ENCODE measurements at regions of chr10 and their contacts with region 1.

Region 1: DNA sequence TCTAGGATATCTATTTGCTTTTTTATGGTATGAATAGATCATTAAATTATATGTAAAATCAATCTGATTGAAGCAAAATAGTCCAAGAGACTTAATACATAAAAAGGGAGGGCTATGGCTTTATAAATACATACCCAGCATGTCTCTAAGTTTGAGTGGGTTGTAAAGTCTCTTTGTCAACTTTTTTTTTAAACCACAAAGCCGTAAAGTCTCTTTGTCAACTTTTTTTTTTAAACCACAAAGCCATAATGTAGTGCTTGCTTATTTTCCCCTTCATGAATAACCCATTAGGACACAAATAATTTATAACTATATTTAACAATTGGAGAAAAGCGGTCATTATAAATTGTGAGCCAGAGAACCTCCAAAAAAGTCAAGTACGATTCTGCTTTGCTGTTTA is 5.7 kb downstream of the HECTD2 start:
- DNase-seq: peak; percentile 25
- ATAC-seq: peak; percentile 57
- H3K4me3 ChIP-seq: no peak overlapping the region
- H3K27ac ChIP-seq: no peak overlapping the region
- H3K4me1 ChIP-seq: peaks cover 18% of the 10 kb centered on the region
- H3K27me3 ChIP-seq: no peaks in the 10 kb centered on the region
- CTCF ChIP-seq: no peak

Region 2: GRCh38 chr10:90592638-90593302 is 823.0 kb before region 1 on chr10:
- CTCF ChIA-PET with region 1: no interaction called
- POLR2A ChIA-PET with region 1: no interaction called
- intact Hi-C with region 1: no loop called
- DNase-seq: peak; percentile 63
- ATAC-seq: peak; percentile 91
- H3K4me3 ChIP-seq: no peak overlapping the region
- H3K27ac ChIP-seq: no peak overlapping the region
- H3K4me1 ChIP-seq: peaks cover 1% of the 10 kb centered on the region
- H3K27me3 ChIP-seq: no peaks in the 10 kb centered on the region
- CTCF ChIP-seq: peak; percentile 72

Region 3: DNA sequence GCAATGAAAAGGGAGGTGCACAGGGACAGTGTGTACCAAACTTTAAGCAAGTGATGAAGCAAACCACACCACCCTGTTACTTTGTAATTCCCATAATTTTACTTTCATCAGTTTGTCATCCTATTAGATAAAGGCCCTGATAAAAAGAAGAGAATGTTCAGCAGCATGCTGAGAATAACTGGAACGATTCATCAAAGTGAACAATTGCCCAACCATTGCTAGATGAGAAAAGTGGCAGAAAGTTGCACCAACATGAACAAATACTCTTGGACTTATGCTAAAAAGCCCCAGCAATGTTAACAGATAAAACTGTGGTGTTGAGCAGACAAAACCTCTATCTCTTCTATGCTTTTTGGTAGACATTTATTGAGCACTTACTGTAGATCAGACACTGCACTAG is 270.9 kb before region 1 on chr10:
- CTCF ChIA-PET with region 1: no interaction called
- POLR2A ChIA-PET with region 1: no interaction called
- intact Hi-C with region 1: no loop called
- DNase-seq: no peak
- ATAC-seq: no peak
- H3K4me3 ChIP-seq: no peak overlapping the region
- H3K27ac ChIP-seq: no peak overlapping the region
- H3K4me1 ChIP-seq: no peaks in the 10 kb centered on the region
- H3K27me3 ChIP-seq: peaks cover 5% of the 10 kb centered on the region; the same call in 1 of the 2 replicates
- CTCF ChIP-seq: no peak

Region 4: DNA sequence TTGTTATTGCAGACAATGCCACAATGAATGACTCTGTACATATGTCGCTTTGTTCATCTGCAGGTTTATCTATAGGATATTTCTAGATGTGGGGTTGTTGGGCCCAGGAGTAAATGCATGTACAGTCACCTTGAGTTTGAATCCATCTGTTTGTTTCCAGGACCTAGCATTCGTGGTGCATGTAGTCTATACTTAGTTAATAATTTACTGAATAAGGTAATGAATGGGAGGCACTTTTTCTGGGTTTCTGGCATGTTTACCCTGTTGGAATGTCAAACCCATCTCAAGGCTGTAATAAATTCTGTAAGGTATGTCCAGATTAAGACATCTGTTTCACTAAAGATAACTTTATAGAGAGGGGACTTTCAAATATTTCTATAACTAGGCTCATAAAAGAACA is 17.8 kb after region 1 on chr10:
- CTCF ChIA-PET with region 1: no interaction called
- POLR2A ChIA-PET with region 1: no interaction called
- intact Hi-C with region 1: loop called (anchors 2 kb)
- DNase-seq: peak; percentile 29
- ATAC-seq: peak; percentile 85
- H3K4me3 ChIP-seq: no peak overlapping the region
- H3K27ac ChIP-seq: peak overlapping the region; percentile 43
- H3K4me1 ChIP-seq: peaks cover 13% of the 10 kb centered on the region
- H3K27me3 ChIP-seq: no peaks in the 10 kb centered on the region
- CTCF ChIP-seq: no peak